Heart right ventricle (tissue), 16 donors: ENCODE measurements at regions of chr3 and their contacts with region 1.

Region 1: DNA sequence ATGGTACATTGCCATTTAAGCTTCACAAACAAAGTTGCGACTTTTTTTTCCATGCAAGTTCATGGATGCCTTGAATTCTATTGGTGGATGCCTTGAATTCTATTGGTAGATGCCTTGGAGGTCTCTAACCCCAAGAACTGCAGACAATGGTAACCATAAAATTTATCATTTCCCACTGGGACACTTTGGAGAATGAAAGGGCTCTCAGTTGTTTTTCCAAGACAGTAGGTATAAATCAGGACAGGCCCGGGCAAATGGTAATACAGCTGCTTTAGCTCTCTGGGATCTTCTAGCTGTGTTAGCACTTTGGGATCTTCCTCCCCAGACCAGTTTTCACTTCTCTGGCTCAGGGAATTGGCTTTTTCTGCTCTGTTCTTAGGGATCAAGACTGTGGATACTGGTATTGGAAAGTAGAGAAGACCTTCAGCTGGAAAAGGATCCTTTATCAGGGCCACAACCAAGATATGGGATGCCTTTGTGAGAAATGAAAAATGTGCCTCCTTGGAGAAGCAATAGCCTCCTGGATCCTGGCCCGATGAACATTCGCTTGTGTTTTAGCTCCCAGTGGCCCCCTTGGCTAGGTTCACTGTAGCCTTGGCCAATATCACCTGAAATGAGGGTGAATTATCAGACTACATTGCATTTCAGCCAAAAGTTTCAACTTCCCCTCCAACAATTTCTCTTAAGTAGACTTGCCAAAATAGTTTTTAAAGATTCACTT is 8.3 kb downstream of the LRRC3B start:
- DNase-seq: no peak
- ATAC-seq: no peak
- H3K4me3 ChIP-seq: no peak overlapping the region
- H3K27ac ChIP-seq: peak overlapping the region in 1 of 10 donors; percentile 7
- H3K4me1 ChIP-seq: peaks cover 0 to 8% (median 0%) of the 10 kb centered on the region in 9 donors
- H3K27me3 ChIP-seq: no peaks in the 10 kb centered on the region
- CTCF ChIP-seq: no peak

Region 2: DNA sequence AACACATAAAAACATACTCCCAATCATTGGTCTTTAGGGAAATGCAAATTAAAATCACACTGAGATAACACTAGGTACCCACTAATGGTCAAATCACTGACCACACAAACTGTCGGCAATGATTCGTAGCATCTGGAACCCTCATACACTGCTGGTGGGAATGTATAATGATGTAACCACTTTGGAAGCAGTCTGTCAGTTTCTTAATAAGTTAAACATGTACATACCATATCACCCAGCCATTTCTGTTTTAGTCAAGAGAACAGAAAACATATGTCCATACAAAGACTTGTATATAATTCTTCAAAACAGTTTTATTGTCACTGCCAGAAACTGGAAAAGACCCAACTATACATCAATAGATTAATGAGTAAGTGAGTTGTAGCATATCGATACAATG is 71.6 kb before region 1 on chr3:
- intact Hi-C with region 1: loop called in 1 of 10 experiments (anchors 5 kb)
- DNase-seq: no peak
- ATAC-seq: no peak
- H3K4me3 ChIP-seq: no peak overlapping the region
- H3K27ac ChIP-seq: no peak overlapping the region
- H3K4me1 ChIP-seq: peaks cover 0 to 9% (median 0%) of the 10 kb centered on the region in 9 donors
- H3K27me3 ChIP-seq: no peaks in the 10 kb centered on the region
- CTCF ChIP-seq: no peak